ENCODE measurements at regions of chr15 and their contacts with region 1.

Region 1: GRCh38 chr15:34987985-34988873 is at the start of gene ZNF770:
- DNase-seq: peak; percentile 29 to 93
- H3K4me3 ChIP-seq: peak within 1 kb of the TSS; percentile 97 to 99 (median 98)
- H3K27ac ChIP-seq: peak within 1 kb of the TSS; percentile 89
- H3K4me1 ChIP-seq: peaks cover 3 to 10% (median 3%) of the 10 kb centered on the region in 4 experiments; a peak in 4 of 7 replicates
- H3K27me3 ChIP-seq: no peaks in the 10 kb centered on the region
- CTCF ChIP-seq: no peak
- EP300 ChIP-seq: no peak
- POLR2A ChIP-seq: peak; percentile 64 to 95
- RAD21 ChIP-seq: 0 out of 4 replicates have a peak, but pooled peaks of 1 of the 2 experiments have one; percentile 2
- total RNA-seq, gene ZNF770: 121 and 143 TPM in 2 replicates

Region 2: DNA sequence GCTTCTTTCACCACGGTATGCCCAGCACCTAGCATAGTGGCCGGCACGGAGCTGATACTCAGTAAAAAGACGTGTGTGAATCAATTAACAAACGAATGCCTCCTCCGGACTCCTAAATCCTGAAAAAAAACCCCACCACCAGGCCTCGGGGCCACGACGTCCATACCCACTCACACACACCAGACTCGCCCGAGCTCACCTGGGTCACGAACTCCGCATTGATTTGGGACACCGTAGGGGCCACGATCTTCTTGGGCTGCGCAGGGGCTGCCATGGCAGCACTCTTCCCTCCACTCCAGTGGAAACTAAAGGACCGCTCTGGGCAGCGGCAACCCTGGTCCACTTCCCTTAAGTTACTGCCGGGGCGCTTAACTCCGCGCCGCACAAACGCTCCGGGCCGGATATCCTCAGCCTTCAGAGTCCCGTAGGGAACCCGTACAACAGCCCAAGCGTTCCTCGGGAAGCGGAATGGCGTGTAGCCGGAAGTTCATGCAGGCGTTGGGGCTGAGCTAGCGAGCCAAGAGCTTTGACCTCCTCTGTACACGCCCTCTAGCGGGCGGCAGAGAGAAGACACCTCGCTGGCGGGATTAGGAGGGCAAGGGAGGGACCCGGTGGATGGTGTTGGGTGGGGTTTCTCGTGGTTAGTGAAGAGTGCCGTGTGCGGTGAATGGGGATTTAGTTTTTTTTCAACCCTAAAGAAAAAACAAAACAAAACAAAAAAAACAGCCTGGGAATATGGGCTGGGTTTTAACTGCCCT is 18.7 kb before region 1 on chr15 and contains the start of gene AQR:
- CTCF ChIA-PET with region 1: interaction called, 19 read pairs
- POLR2A ChIA-PET with region 1: interaction called, 26 read pairs
- DNase-seq: peak; percentile 95
- H3K4me3 ChIP-seq: peak within 1 kb of the TSS; percentile 99 to 100 (median 100)
- H3K27ac ChIP-seq: peak within 1 kb of the TSS; percentile 86
- H3K4me1 ChIP-seq: peaks cover 0 to 3% (median 0%) of the 10 kb centered on the region in 4 experiments; a peak in 1 of 7 replicates
- H3K27me3 ChIP-seq: no peaks in the 10 kb centered on the region
- CTCF ChIP-seq: peak; percentile 91 to 99 (median 91)
- EP300 ChIP-seq: peak in 1 of 2 experiments; percentile 75; a peak in 1 of 3 replicates
- POLR2A ChIP-seq: peak; percentile 86 to 94
- RAD21 ChIP-seq: peak; percentile 38 to 61
- total RNA-seq, gene AQR: 57.6 and 57.9 TPM in 2 replicates

Region 3: GRCh38 chr15:34976743-34977142 is 11.5 kb before region 1 on chr15:
- CTCF ChIA-PET with region 1: interaction called, 19 read pairs
- POLR2A ChIA-PET with region 1: interaction called, 28 read pairs
- DNase-seq: no peak
- H3K4me3 ChIP-seq: no peak overlapping the region
- H3K27ac ChIP-seq: no peak overlapping the region
- H3K4me1 ChIP-seq: peaks cover 0 to 5% (median 2%) of the 10 kb centered on the region in 4 experiments; a peak in 2 of 7 replicates
- H3K27me3 ChIP-seq: no peaks in the 10 kb centered on the region
- CTCF ChIP-seq: no peak
- EP300 ChIP-seq: no peak
- POLR2A ChIP-seq: no peak
- RAD21 ChIP-seq: no peak

Region 4: DNA sequence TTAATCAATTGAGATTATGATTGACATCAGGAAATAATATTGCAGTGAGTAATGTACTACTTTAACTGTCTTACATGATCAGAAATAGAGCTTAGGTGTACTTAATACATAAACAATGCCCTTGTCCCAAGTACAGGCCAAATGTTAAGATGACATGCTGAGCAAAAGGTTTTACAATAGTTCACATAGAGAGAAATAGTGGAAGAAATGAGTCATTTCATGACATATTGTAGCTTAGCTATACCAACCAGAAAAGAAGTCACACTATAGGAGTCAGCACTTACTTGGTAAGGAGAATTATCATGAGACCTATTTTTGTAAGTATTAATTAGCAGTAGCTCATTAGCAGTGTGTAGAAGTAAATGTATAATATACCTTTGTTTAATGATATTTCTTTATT is 193.3 kb after region 1 on chr15:
- CTCF ChIA-PET with region 1: no interaction called
- POLR2A ChIA-PET with region 1: no interaction called
- DNase-seq: no peak
- H3K4me3 ChIP-seq: no peak overlapping the region
- H3K27ac ChIP-seq: no peak overlapping the region
- H3K4me1 ChIP-seq: peaks cover 0 to 14% (median 3%) of the 10 kb centered on the region in 4 experiments; a peak in 4 of 7 replicates
- H3K27me3 ChIP-seq: no peaks in the 10 kb centered on the region; a peak in 1 of 7 replicates
- CTCF ChIP-seq: no peak
- EP300 ChIP-seq: no peak
- POLR2A ChIP-seq: no peak
- RAD21 ChIP-seq: no peak